Sigmoid colon (tissue), 7 donors: ENCODE measurements at regions of chr19 and their contacts with region 1.

Region 1: DNA sequence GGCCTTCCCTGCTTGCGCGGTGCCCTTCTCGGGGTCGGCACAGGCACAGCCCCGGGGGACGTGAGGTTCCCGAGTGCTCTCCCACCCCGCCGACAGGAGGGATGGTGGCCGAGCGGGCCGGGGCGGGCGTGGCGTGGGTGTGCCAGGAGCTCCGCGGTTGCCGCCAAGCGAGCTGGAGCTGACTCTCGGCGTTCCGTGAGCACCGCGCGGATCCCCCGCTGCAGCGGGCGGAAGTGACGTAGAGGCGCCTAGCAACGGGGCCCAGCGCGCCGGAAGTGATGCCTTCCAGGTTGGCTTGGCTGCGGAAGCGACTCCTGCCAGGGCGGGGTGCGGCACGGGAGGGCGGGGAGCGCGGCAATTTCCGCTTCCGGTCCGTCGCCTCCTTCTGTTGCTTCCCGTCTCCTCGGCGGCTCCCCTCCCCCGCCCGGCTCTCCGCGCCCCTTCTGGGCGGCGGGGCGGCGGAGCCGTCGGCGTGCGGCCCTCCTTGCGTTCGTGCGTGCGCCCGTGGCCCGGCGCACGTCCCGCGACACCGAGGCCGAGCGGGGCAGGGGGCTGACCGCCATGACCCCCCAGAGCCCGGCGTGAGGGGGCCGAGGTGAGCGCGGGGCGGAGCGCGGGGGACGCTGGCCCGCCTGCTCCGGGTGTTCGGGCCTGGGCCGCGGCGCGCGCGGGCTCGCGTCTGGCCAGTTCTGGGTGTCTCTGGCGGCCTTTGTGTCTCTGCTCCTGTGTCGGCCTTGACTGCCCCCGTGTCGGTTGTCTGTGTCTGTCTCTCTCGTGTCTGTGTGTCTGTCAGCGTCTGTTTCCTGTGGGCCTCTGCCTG is at the start of gene EPN1:
- DNase-seq: peak; percentile 99
- H3K4me3 ChIP-seq: peak within 1 kb of the TSS; percentile 51 to 99 (median 94)
- H3K27ac ChIP-seq: peak within 1 kb of the TSS; percentile 86 to 98 (median 90)
- H3K4me1 ChIP-seq: peaks cover 0 to 49% (median 42%) of the 10 kb centered on the region in 4 donors
- H3K27me3 ChIP-seq: no peaks in the 10 kb centered on the region
- CTCF ChIP-seq: no peak
- EP300 ChIP-seq: no peak
- POLR2A ChIP-seq: no peak
- total RNA-seq, gene EPN1: 22.8 to 54.3 (median 34.6) TPM

Region 2: GRCh38 chr19:55062734-55063492 is 612.1 kb before region 1 on chr19 and contains the start of gene RDH13:
- intact Hi-C with region 1: loop called (anchors 10 kb)
- DNase-seq: peak; percentile 98
- H3K4me3 ChIP-seq: peak within 1 kb of the TSS; percentile 72 to 90 (median 85)
- H3K27ac ChIP-seq: peak within 1 kb of the TSS; percentile 73 to 81 (median 76)
- H3K4me1 ChIP-seq: peaks cover 0 to 12% (median 10%) of the 10 kb centered on the region in 4 donors
- H3K27me3 ChIP-seq: peaks cover 0 to 7% (median 0%) of the 10 kb centered on the region in 3 donors
- CTCF ChIP-seq: no peak
- EP300 ChIP-seq: no peak
- POLR2A ChIP-seq: peak in 1 of 2 donors; percentile 16
- total RNA-seq, gene RDH13: 6.9 to 12.1 (median 9.9) TPM